Heart right ventricle (tissue), 16 donors: ENCODE measurements at regions of chr4 and their contacts with region 1.

Region 1: DNA sequence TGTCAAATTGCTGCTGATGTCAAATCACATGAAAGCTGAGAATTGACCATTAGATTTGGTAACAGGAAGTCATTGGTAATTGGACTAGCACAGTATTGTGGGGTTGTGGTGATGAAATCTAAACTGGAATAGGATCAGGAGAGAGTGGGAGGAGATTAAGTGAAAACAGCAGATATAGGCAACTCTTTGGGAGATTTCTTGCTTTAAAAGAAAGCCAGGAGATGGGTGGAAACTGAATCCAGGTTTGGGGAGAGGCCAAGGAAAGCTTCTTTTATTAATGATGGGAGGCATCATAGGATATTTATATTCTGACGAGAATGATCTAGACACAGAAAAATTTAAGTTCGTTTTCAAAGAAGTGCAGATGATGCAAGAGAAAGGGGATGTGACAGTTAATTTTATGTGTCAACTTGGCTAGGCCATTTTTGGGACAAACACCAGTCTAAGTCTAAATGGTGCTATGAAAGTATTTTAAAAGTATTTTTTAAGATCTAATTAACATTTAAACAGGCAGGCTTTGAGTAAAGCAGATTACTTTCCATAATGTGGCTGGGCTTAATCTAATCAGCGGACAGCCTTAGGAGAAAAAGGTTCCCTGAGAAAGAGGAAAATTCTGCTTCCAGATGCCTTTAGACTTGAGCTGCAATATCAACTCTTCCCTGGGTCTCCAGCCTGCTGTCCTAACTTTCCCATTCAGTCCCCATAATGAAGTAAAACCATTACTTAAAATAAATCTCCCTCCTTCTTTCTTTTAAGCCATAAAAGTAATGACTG is 24.7 kb downstream of the SEC24D start:
- DNase-seq: no peak
- ATAC-seq: peak in 3 of 8 donors; percentile 34 to 68 (median 47)
- H3K4me3 ChIP-seq: no peak overlapping the region
- H3K27ac ChIP-seq: peak overlapping the region in 3 of 10 donors; percentile 2 to 59 (median 20)
- H3K4me1 ChIP-seq: peaks cover 0 to 26% (median 10%) of the 10 kb centered on the region in 9 donors
- H3K27me3 ChIP-seq: no peaks in the 10 kb centered on the region
- CTCF ChIP-seq: no peak

Region 2: GRCh38 chr4:118865091-118865708 is 54.0 kb after region 1 on chr4:
- intact Hi-C with region 1: loop called in 1 of 10 experiments (anchors 2 kb)
- DNase-seq: peak in 1 of 2 donors; percentile 23
- ATAC-seq: peak; percentile 67 to 88 (median 77)
- H3K4me3 ChIP-seq: no peak overlapping the region
- H3K27ac ChIP-seq: peak overlapping the region in 2 of 10 donors; percentile 18 to 32
- H3K4me1 ChIP-seq: peaks cover 2 to 21% (median 10%) of the 10 kb centered on the region in 9 donors
- H3K27me3 ChIP-seq: no peaks in the 10 kb centered on the region
- CTCF ChIP-seq: peak; percentile 29 to 76 (median 58)

Region 3: GRCh38 chr4:118905566-118905965 is 94.4 kb after region 1 on chr4:
- intact Hi-C with region 1: no loop called
- DNase-seq: no peak
- ATAC-seq: peak in 6 of 8 donors; percentile 14 to 65 (median 25)
- H3K4me3 ChIP-seq: no peak overlapping the region
- H3K27ac ChIP-seq: peak overlapping the region in 9 of 10 donors; percentile 4 to 89 (median 68)
- H3K4me1 ChIP-seq: peaks cover 4 to 87% (median 54%) of the 10 kb centered on the region in 9 donors
- H3K27me3 ChIP-seq: no peaks in the 10 kb centered on the region
- CTCF ChIP-seq: no peak